Psoas muscle (tissue), 8 donors: ENCODE measurements at regions of chr3 and their contacts with region 1.

Region 1: DNA sequence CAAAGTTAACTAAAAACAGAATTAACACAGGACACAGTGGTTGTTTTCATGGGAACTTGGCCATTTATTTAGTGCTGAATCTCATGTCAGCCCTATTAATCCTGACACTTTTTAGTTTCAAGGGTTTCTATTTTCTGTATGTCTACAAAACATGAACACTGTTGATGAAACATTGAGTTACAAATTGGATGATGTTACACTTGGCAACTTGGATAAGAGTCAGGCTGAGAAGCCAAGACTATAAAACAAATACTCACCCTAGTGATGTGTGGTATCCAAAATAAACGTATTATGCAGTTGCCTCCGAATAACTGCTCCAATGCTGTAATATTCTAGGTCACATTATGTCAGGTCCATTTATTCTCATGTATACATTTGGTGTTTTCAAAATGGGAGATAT is 349.6 kb downstream of the ZIC1 start:
- DNase-seq: no peak
- ATAC-seq: peak; percentile 79 to 98 (median 96)
- H3K4me3 ChIP-seq: no peak overlapping the region
- H3K27ac ChIP-seq: peak overlapping the region; percentile 78
- H3K4me1 ChIP-seq: peaks cover 26% of the 10 kb centered on the region
- H3K27me3 ChIP-seq: no peaks in the 10 kb centered on the region
- CTCF ChIP-seq: no peak

Region 2: GRCh38 chr3:147654827-147655226 is 103.9 kb before region 1 on chr3:
- intact Hi-C with region 1: loop called in 1 of 2 experiments (anchors 10 kb)
- DNase-seq: no peak
- ATAC-seq: peak in 3 of 4 donors; percentile 21 to 46 (median 26)
- H3K4me3 ChIP-seq: no peak overlapping the region
- H3K27ac ChIP-seq: peak overlapping the region; percentile 58
- H3K4me1 ChIP-seq: peaks cover 27% of the 10 kb centered on the region
- H3K27me3 ChIP-seq: no peaks in the 10 kb centered on the region
- CTCF ChIP-seq: no peak